ENCODE measurements at regions of chr11 and their contacts with region 1.

Region 1: GRCh38 chr11:27718346-27718852 is 18.1 kb upstream of the BDNF start:
- DNase-seq: peak; percentile 73
- ATAC-seq: peak; percentile 84
- H3K4me3 ChIP-seq: peak overlapping the region; percentile 57 to 62
- H3K27ac ChIP-seq: peak overlapping the region; percentile 85
- H3K4me1 ChIP-seq: peaks cover 18 to 28% of the 10 kb centered on the region in 2 experiments; a peak in 3 of 4 replicates
- H3K27me3 ChIP-seq: no peaks in the 10 kb centered on the region
- CTCF ChIP-seq: no peak
- POLR2A ChIP-seq: peak; percentile 87
- RAD21 ChIP-seq: no peak

Region 2: DNA sequence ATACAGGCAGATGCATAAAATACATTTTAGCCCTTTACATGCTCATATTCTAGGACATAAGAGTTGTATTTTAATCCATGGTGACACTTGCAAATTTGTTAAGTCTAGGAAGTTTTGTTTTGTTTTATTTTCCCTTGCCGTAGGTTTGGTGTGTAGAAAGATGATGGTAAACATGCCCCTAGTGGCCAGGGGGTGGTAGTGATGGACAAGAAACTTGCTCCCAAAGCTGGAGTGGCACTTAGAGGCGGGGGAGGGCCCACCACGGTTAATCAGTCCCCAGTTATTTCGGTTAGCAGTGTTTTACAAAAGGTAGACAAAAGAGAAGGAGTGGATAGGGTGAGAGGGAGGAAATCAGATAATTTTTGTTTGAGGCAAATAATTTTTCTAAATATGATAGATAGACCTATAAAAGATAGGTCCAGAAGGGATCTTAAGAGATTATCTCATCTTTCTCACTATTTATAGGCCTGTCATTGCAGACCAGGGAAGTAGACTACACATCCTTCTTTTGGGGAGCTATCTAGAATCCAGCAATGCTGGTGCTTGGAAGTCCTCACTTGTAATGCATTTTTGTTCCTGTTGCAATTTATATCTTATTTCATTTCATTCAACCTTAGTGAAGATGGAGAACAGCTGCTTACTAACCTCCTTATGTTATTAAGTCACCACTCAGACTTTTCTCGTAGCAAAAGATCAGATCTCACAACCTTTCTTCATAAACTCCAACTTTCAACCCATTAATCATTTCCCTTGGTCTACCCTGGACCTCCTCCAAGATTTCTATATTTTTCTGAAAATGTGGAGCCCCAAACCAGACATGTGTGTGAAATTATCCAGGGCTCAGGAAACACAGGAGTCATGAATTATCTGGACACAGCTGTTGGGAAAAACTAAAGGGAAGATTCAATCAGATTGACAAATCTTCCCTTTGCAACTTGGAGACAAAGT is 12.3 kb before region 1 on chr11:
- CTCF ChIA-PET with region 1: interaction called, 39 read pairs
- POLR2A ChIA-PET with region 1: interaction called, 5 read pairs
- RAD21 ChIA-PET with region 1: interaction called in 1 of 2 experiments, 12 read pairs
- intact Hi-C with region 1: no loop called
- DNase-seq: no peak
- ATAC-seq: peak; percentile 64
- H3K4me3 ChIP-seq: peak overlapping the region in 1 of 2 experiments; percentile 17; a peak in 1 of 4 replicates
- H3K27ac ChIP-seq: no peak overlapping the region
- H3K4me1 ChIP-seq: peaks cover 22 to 31% of the 10 kb centered on the region in 2 experiments
- H3K27me3 ChIP-seq: no peaks in the 10 kb centered on the region
- CTCF ChIP-seq: peak; percentile 41 to 90 (median 88); a peak in 5 of 6 replicates
- POLR2A ChIP-seq: no peak
- RAD21 ChIP-seq: peak; percentile 62

Region 3: DNA sequence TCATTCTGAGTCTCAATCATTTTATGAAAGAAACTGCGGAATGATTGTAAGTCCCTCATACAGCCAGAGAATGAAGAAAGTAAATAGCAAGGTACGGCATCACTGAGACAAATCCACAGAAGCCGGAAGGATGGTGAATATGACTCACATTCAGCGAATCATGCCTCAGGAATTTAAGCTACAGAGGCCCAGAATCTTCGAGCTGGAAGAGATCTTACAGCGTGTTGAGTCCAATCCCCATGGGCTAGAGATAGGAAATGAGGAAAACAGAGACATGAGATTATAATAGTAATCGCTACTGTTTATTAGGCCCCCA is 216.4 kb after region 1 on chr11:
- CTCF ChIA-PET with region 1: interaction called, 3 read pairs
- POLR2A ChIA-PET with region 1: interaction called, 13 read pairs
- RAD21 ChIA-PET with region 1: interaction called in 1 of 2 experiments, 3 read pairs
- intact Hi-C with region 1: loop called (anchors 2 kb)
- DNase-seq: peak; percentile 93
- ATAC-seq: peak; percentile 62
- H3K4me3 ChIP-seq: peak overlapping the region in 1 of 2 experiments; percentile 26; a peak in 2 of 4 replicates
- H3K27ac ChIP-seq: peak overlapping the region; percentile 98
- H3K4me1 ChIP-seq: peaks cover 31 to 59% of the 10 kb centered on the region in 2 experiments
- H3K27me3 ChIP-seq: no peaks in the 10 kb centered on the region
- CTCF ChIP-seq: no peak
- POLR2A ChIP-seq: peak; percentile 35
- RAD21 ChIP-seq: no peak

Region 4: DNA sequence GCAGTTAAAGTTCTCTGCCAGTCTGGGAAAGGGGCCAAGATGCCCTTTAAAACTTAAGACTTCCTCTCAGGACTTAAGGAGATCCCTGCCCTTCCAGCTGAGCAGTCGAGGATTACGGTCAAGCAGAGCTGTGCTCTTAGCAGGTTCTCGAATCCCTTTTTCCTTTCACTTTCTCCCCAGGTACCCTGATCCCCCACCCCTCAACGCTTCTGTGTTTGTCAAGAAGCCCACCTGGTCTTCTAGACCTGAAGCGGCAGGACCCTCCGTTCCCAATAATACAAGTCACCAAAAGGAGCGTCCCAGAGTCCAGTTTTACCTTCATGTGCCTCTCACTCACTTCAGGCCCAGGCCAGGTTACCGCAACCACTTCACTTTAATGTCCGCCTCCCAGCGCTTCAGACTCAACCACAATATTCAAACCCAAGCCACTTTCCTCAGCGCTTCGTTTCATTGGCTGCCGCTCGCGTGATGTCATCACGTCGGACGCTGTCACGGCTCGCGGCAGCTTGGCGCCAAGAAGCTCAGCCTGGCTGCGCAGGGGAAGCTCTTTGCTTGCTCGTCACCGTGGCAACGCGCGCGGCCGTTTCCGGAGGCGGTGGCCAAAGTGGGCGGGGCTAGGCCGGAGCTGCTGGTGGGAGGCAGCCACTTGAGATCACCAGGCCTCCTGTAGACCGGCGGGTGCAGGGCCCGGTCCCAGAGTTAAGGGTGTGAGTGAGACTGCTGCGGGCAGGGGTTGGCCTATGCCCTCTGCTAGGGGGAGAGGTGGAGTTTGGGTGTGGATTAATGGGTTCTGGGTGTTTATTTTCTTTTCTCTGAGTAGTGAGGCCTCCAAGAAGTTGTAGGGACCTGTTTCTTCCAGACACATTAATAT is 389.6 kb after region 1 on chr11 and contains the starts of genes KIF18A and METTL15:
- CTCF ChIA-PET with region 1: no interaction called
- POLR2A ChIA-PET with region 1: no interaction called
- RAD21 ChIA-PET with region 1: no interaction called
- intact Hi-C with region 1: loop called (anchors 5 kb)
- DNase-seq: peak; percentile 97
- ATAC-seq: peak; percentile 89
- H3K4me3 ChIP-seq: peak within 1 kb of the TSS; percentile 78 to 81
- H3K27ac ChIP-seq: peak within 1 kb of the TSS; percentile 73
- H3K4me1 ChIP-seq: peaks cover 23 to 34% of the 10 kb centered on the region in 2 experiments; a peak in 3 of 4 replicates
- H3K27me3 ChIP-seq: no peaks in the 10 kb centered on the region
- CTCF ChIP-seq: no peak
- POLR2A ChIP-seq: peak; percentile 75
- RAD21 ChIP-seq: peak; percentile 4; the same call in 1 of the 2 replicates
- total RNA-seq, gene KIF18A: 50.7 TPM
- total RNA-seq, gene METTL15: 25.3 TPM

Region 5: DNA sequence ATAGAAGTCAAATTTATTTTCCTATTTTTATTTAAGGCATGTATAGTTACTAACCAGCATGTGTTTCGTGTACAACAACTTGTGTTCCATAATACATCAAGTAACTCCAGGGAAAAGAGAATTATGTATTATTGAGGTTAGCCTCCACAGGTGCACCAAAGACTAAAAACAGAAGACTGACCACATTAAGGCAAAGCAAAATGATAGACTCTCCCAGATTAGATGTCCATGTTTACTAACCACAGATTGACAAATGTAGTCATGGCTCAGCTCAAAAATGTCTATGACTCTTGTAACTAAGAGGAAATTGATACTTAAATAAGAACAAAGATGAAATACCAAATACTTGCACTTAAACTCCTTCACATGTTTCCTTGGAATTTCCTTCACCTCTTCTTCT is 628.3 kb after region 1 on chr11:
- CTCF ChIA-PET with region 1: no interaction called
- POLR2A ChIA-PET with region 1: no interaction called
- RAD21 ChIA-PET with region 1: no interaction called
- intact Hi-C with region 1: no loop called
- DNase-seq: no peak
- ATAC-seq: no peak
- H3K4me3 ChIP-seq: no peak overlapping the region
- H3K27ac ChIP-seq: no peak overlapping the region
- H3K4me1 ChIP-seq: peaks cover 28 to 39% of the 10 kb centered on the region in 2 experiments
- H3K27me3 ChIP-seq: no peaks in the 10 kb centered on the region
- CTCF ChIP-seq: no peak
- POLR2A ChIP-seq: no peak
- RAD21 ChIP-seq: no peak

Region 6: GRCh38 chr11:29159552-29160465 is 1441.4 kb after region 1 on chr11:
- CTCF ChIA-PET with region 1: interaction called, 10 read pairs
- POLR2A ChIA-PET with region 1: no interaction called
- RAD21 ChIA-PET with region 1: no interaction called
- intact Hi-C with region 1: no loop called
- DNase-seq: peak; percentile 31
- ATAC-seq: peak; percentile 99
- H3K4me3 ChIP-seq: no peak overlapping the region
- H3K27ac ChIP-seq: no peak overlapping the region
- H3K4me1 ChIP-seq: no peaks in the 10 kb centered on the region
- H3K27me3 ChIP-seq: no peaks in the 10 kb centered on the region
- CTCF ChIP-seq: peak; percentile 53 to 78 (median 65); a peak in 5 of 6 replicates
- POLR2A ChIP-seq: peak; percentile 36
- RAD21 ChIP-seq: peak; percentile 81

Measured in HCT116 (cell line).